ENCODE measurements at regions of chr18 and their contacts with region 1.

Region 1: DNA sequence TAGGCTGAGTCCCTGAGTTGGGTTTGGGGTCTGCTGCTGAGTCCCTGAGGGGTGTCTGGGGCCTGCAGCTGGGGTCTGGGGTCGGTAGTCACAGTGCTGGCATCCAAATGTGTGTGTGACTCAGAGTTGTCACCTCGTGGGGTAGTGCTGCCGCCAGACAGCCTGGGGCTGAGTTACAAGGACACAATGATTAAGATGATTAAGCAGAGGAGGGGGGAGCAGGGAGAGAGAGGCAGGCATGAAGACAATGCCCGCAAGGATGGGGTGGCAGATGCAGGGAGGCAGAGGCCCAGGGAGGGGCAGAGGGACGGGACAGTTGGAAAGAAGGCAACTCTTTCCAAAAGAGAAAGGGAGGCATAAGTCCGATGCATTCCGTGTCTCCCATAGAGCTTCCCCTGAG is 120.2 kb downstream of the CELF4 start:
- DNase-seq: peak; percentile 54
- H3K4me3 ChIP-seq: no peak overlapping the region
- H3K27ac ChIP-seq: peak overlapping the region in 1 of 2 experiments; percentile 74; a peak in 2 of 4 replicates
- H3K4me1 ChIP-seq: peaks cover 0 to 79% of the 10 kb centered on the region in 2 experiments; a peak in 2 of 4 replicates
- H3K27me3 ChIP-seq: no peaks in the 10 kb centered on the region
- CTCF ChIP-seq: no peak
- EP300 ChIP-seq: no peak
- RAD21 ChIP-seq: no peak

Region 2: DNA sequence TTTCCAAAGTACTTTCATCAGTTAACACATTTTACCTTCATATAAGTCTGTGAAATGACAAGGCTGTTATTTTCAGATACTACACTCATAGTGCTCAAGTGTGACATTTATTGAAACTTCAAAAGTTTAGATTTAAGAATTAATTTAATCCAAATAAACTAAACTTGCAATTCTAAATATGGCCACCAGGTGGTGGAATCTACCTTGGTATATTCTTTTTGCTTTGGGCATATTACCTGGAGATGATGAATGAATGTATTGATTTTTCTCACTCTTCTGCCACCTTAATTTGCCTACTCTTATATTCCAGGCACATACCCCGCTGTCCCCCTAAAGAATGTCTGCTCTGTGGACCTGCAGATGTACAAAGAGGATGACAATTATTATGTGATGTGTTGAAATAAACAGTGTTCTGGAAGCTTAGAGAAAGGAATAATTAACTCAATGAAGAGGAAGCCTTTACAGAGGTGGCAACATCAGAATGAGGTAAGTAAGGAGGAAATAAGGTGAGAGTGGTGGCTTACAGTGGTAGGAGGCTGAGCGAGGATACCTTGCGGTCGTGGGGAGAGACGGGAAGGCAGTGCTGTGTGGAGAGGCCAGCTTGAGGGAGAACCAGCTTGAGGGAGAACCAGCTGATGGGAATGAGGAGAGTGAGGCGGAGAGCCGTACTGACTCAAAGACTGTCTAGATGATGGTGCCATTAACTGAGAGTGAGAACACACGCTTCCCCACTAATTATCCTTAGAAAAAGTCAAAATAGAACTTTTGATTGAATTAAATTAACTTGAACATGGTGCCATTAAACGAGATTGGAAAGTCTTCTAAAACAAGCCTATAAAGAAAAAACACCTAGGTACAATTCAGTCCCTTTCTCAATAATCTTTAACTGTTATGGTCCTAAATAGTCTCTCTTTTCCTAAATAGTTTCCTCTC is 59.3 kb before region 1 on chr18:
- CTCF ChIA-PET with region 1: interaction called, 26 read pairs
- POLR2A ChIA-PET with region 1: no interaction called
- DNase-seq: peak; percentile 52
- H3K4me3 ChIP-seq: no peak overlapping the region; a peak in 1 of 4 replicates
- H3K27ac ChIP-seq: no peak overlapping the region
- H3K4me1 ChIP-seq: peaks cover 0 to 26% of the 10 kb centered on the region in 2 experiments; a peak in 1 of 4 replicates
- H3K27me3 ChIP-seq: no peaks in the 10 kb centered on the region
- CTCF ChIP-seq: peak; percentile 72
- EP300 ChIP-seq: no peak
- RAD21 ChIP-seq: peak; percentile 79

Region 3: GRCh38 chr18:37430357-37431076 is 14.9 kb before region 1 on chr18:
- CTCF ChIA-PET with region 1: interaction called, 10 read pairs
- POLR2A ChIA-PET with region 1: no interaction called
- DNase-seq: peak; percentile 59
- H3K4me3 ChIP-seq: no peak overlapping the region
- H3K27ac ChIP-seq: peak overlapping the region in 1 of 2 experiments; percentile 65; a peak in 2 of 4 replicates
- H3K4me1 ChIP-seq: peaks cover 0 to 21% of the 10 kb centered on the region in 2 experiments; a peak in 1 of 4 replicates
- H3K27me3 ChIP-seq: no peaks in the 10 kb centered on the region
- CTCF ChIP-seq: no peak
- EP300 ChIP-seq: no peak
- RAD21 ChIP-seq: peak; percentile 48

Region 4: DNA sequence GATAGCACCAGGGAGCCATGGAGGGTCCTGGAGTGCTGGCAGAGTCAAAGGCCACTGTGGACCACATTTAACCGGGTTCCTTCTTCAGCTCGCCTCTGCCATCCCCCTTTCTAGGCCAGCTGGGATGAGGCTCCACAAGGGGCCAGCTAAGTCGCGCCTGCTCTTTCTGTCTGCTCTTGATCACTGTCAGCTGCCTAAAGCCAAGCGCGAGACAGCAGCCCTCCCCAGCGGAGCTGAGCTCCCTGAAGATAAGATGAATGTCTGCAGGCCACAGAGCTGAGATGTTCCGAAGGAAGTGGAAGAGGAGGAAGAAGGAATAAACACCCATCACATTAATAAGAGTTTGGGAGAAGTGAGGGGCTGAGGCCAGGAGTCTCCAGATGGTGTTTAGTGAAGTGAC is 20.6 kb after region 1 on chr18:
- CTCF ChIA-PET with region 1: interaction called, 12 read pairs
- POLR2A ChIA-PET with region 1: no interaction called
- DNase-seq: peak; percentile 60
- H3K4me3 ChIP-seq: no peak overlapping the region
- H3K27ac ChIP-seq: peak overlapping the region in 1 of 2 experiments; percentile 84; a peak in 2 of 4 replicates
- H3K4me1 ChIP-seq: peaks cover 0 to 55% of the 10 kb centered on the region in 2 experiments; a peak in 1 of 4 replicates
- H3K27me3 ChIP-seq: no peaks in the 10 kb centered on the region
- CTCF ChIP-seq: no peak
- EP300 ChIP-seq: peak in 1 of 2 experiments; percentile 47; a peak in 1 of 4 replicates
- RAD21 ChIP-seq: peak; percentile 20; the same call in 1 of the 2 replicates

Region 5: GRCh38 chr18:37516361-37516853 is 71.0 kb after region 1 on chr18:
- CTCF ChIA-PET with region 1: interaction called, 24 read pairs
- POLR2A ChIA-PET with region 1: no interaction called
- DNase-seq: peak; percentile 77
- H3K4me3 ChIP-seq: no peak overlapping the region
- H3K27ac ChIP-seq: peak overlapping the region in 1 of 2 experiments; percentile 93; a peak in 2 of 4 replicates
- H3K4me1 ChIP-seq: peaks cover 0 to 65% of the 10 kb centered on the region in 2 experiments; a peak in 2 of 4 replicates
- H3K27me3 ChIP-seq: no peaks in the 10 kb centered on the region
- CTCF ChIP-seq: no peak
- EP300 ChIP-seq: peak in 1 of 2 experiments; percentile 88; a peak in 2 of 4 replicates
- RAD21 ChIP-seq: no peak

Region 6: DNA sequence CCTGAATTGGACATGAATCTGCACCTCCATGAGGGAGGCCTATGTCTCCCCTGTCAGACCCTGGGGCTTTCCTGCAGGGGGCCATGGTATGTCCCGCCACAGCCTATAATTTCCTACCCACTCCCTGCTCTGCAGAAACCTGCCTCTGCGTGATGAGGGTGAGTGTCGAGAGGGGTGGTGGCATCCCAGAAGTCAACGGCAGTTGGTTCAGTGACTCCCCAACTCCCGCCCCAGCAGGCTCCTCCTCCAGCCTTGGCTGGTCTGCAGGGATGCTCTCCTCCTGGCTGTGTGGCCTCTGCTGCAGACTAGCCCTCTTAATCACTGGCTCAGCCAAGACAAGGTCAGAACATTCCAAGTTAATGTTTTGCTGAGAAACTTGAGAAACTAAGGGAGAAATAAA is 106.9 kb after region 1 on chr18:
- CTCF ChIA-PET with region 1: no interaction called
- POLR2A ChIA-PET with region 1: no interaction called
- DNase-seq: no peak
- H3K4me3 ChIP-seq: no peak overlapping the region
- H3K27ac ChIP-seq: no peak overlapping the region; a peak in 1 of 4 replicates
- H3K4me1 ChIP-seq: peaks cover 0 to 45% of the 10 kb centered on the region in 2 experiments; a peak in 2 of 4 replicates
- H3K27me3 ChIP-seq: no peaks in the 10 kb centered on the region
- CTCF ChIP-seq: no peak
- EP300 ChIP-seq: no peak
- RAD21 ChIP-seq: no peak

Region 7: DNA sequence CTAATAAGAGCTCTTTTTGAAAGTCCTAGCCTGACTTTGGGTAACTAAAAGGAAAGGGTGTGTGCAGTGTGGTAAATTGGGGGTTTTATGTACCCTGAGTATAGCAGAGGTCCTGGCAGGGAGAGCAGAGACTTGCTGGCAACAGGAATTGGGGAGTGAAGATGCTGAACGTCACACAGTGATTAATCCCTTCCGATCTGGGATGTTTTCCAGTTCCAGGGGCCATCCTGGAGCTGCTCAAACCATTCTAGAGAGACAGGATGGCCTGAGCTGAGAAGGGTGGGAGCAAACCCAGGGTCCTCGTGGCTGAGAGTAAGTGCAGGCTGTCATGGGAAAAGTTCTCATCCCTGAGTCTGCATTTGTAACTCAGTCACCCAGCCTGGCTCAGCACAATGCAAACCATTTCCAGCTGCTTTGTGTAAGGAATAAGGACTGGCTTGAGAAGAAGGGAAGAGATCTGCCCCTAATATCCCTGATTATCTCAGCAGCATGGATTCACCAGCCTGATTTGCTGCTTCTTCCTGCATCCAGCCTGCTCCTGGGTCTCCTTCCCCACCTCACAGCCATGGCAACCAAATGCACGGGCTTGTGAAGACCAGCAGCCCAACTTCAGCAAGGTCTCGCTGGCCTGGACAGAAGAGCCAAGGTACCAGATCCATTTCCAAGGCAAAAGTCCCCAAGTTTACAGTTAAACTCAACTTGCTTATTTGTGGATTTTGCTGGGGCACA is 167.3 kb after region 1 on chr18:
- CTCF ChIA-PET with region 1: no interaction called
- POLR2A ChIA-PET with region 1: no interaction called
- DNase-seq: no peak
- H3K4me3 ChIP-seq: no peak overlapping the region
- H3K27ac ChIP-seq: no peak overlapping the region
- H3K4me1 ChIP-seq: no peaks in the 10 kb centered on the region; a peak in 1 of 4 replicates
- H3K27me3 ChIP-seq: no peaks in the 10 kb centered on the region
- CTCF ChIP-seq: no peak
- EP300 ChIP-seq: no peak
- RAD21 ChIP-seq: no peak

Region 8: GRCh38 chr18:37762076-37762621 is 316.8 kb after region 1 on chr18:
- CTCF ChIA-PET with region 1: no interaction called
- POLR2A ChIA-PET with region 1: no interaction called
- DNase-seq: no peak
- H3K4me3 ChIP-seq: no peak overlapping the region
- H3K27ac ChIP-seq: no peak overlapping the region
- H3K4me1 ChIP-seq: peaks cover 0 to 9% of the 10 kb centered on the region in 2 experiments; a peak in 1 of 4 replicates
- H3K27me3 ChIP-seq: no peaks in the 10 kb centered on the region
- CTCF ChIP-seq: no peak
- EP300 ChIP-seq: no peak
- RAD21 ChIP-seq: no peak

Region 9: DNA sequence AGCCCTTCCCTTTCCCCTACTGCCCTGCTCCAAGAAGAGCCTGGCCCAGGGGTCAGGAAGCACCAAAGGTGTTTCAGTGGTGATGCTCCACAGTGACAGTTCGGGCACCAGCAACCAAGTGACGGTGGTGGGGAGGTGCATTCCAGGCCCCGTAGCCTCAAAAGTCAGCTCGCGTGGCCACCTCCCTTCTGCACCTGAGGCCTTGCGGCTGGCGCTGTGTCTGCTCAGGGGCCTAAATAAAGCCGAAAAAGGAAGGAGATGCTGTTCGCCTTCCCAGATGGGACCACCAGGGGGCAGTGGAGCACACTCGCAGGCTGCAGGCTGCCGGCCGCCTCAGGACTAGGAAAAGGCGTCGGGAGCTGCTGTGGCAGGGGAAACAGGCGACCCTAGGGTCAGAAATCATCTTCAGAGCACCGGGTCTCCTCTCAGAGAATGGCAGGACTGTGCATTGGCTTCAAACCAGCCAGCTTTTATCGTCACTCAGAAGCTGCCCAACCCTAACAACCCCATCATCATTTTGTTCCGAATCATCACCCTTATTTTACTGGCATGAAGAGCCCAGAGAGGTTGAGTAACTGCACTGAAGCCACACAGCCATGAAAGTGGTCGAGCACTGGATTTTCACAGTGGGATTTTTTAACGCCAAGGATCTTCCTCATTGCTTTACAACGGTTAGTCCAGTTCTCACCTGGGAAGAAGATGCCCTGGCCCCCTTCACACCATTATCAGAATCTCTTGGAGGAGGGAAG is 333.2 kb after region 1 on chr18:
- CTCF ChIA-PET with region 1: interaction called, 12 read pairs
- POLR2A ChIA-PET with region 1: no interaction called
- DNase-seq: peak; percentile 78
- H3K4me3 ChIP-seq: peak overlapping the region in 1 of 2 experiments; percentile 50; a peak in 1 of 4 replicates
- H3K27ac ChIP-seq: no peak overlapping the region
- H3K4me1 ChIP-seq: no peaks in the 10 kb centered on the region; a peak in 1 of 4 replicates
- H3K27me3 ChIP-seq: no peaks in the 10 kb centered on the region
- CTCF ChIP-seq: peak; percentile 50
- EP300 ChIP-seq: no peak
- RAD21 ChIP-seq: peak; percentile 82

Measured in SK-N-SH (cell line).